BJ (cell line): ENCODE measurements at regions of chr20 and their contacts with region 1.

Region 1: GRCh38 chr20:25378189-25378883 is 12.3 kb downstream of the ABHD12 start:
- DNase-seq: no peak
- H3K4me3 ChIP-seq: no peak overlapping the region
- H3K27me3 ChIP-seq: no peaks in the 10 kb centered on the region
- CTCF ChIP-seq: no peak

Region 2: GRCh38 chr20:24785141-24786125 is 592.9 kb before region 1 on chr20:
- CTCF ChIA-PET with region 1: no interaction called
- POLR2A ChIA-PET with region 1: interaction called, 14 read pairs
- DNase-seq: peak; percentile 24
- H3K4me3 ChIP-seq: no peak overlapping the region
- H3K27me3 ChIP-seq: peaks cover 2% of the 10 kb centered on the region; the same call in 1 of the 2 replicates
- CTCF ChIP-seq: no peak

Region 3: GRCh38 chr20:25269057-25269593 is 109.2 kb before region 1 on chr20:
- CTCF ChIA-PET with region 1: no interaction called
- POLR2A ChIA-PET with region 1: no interaction called
- DNase-seq: no peak
- H3K4me3 ChIP-seq: no peak overlapping the region
- H3K27me3 ChIP-seq: no peaks in the 10 kb centered on the region
- CTCF ChIP-seq: no peak

Region 4: DNA sequence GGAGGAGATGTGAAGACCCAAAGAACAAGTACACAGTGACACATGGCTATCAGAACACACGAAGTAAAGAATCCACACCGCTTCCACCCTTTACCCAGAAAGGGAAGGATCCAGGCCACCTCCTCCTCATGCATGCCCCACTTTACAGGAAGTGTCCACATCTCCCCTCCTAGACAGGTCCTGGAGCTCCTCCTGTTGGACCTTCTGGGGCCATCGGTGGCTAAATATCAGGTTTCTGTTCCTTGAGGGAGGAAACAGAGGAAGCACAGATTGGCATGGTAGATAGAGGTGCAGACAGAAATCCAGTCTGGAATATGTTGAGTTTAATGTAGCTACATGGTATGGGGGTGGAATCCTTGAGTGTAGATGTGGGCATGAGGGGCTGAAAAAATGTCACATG is 196.1 kb after region 1 on chr20:
- CTCF ChIA-PET with region 1: no interaction called
- POLR2A ChIA-PET with region 1: no interaction called
- DNase-seq: no peak
- H3K4me3 ChIP-seq: no peak overlapping the region
- H3K27me3 ChIP-seq: no peaks in the 10 kb centered on the region
- CTCF ChIP-seq: peak; percentile 41